RWPE1 (cell line): ENCODE measurements at regions of chr17 and their contacts with region 1.

Region 1: GRCh38 chr17:45218895-45219661 is 2.6 kb upstream of the FMNL1 start:
- DNase-seq: peak; percentile 70
- H3K27ac ChIP-seq: peak overlapping the region; percentile 12; the same call in 1 of the 2 replicates
- CTCF ChIP-seq: peak; percentile 89

Region 2: DNA sequence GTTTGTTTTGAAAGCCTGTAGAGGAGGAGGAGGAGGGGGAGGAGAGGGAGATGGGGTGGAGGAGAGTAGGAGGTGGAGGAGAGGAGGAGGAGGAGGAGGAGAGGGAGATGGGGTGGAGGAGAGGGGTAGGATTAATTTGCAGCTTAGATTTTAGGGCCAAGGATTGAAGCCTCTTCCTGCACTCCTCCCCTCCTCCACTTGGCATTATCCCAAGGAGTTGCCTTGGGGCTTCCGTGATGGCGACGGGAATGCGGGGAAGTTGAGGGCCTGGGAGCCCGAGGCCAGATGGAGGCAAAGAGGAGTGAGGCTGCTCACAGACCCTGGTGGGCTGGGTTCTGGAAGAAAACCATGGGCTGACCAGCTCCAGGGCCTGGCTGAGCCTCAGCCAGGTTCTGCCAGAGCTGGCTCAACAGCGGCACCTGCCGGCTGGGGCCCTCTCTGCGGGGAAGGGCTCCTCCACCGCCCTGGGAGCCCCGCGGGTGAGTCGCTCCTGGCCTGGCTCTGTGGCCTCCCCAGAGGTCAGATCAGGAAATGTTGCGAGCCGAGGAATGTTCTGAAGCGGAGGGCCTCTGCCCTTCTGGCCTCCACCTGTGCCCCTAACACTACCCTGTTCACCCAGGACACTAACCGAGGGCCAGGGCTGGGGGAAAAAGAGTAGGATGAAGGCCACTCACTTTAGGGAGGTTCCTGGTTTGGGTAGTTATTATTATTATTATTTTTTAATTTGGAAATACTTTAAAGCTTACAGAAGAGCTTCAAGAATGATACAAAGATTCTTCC is 21.3 kb before region 1 on chr17:
- CTCF ChIA-PET with region 1: interaction called, 10 read pairs
- POLR2A ChIA-PET with region 1: no interaction called
- DNase-seq: peak; percentile 86
- H3K27ac ChIP-seq: peak overlapping the region; percentile 69
- CTCF ChIP-seq: peak; percentile 99

Region 3: GRCh38 chr17:45235416-45236281 is 16.6 kb after region 1 on chr17:
- CTCF ChIA-PET with region 1: interaction called, 24 read pairs
- POLR2A ChIA-PET with region 1: interaction called, 6 read pairs
- DNase-seq: peak; percentile 61
- H3K27ac ChIP-seq: no peak overlapping the region
- CTCF ChIP-seq: peak; percentile 87

Region 4: GRCh38 chr17:45277216-45277849 is 58.3 kb after region 1 on chr17:
- CTCF ChIA-PET with region 1: interaction called, 10 read pairs
- POLR2A ChIA-PET with region 1: no interaction called
- DNase-seq: peak; percentile 70
- H3K27ac ChIP-seq: peak overlapping the region; percentile 87
- CTCF ChIP-seq: peak; percentile 90

Region 5: DNA sequence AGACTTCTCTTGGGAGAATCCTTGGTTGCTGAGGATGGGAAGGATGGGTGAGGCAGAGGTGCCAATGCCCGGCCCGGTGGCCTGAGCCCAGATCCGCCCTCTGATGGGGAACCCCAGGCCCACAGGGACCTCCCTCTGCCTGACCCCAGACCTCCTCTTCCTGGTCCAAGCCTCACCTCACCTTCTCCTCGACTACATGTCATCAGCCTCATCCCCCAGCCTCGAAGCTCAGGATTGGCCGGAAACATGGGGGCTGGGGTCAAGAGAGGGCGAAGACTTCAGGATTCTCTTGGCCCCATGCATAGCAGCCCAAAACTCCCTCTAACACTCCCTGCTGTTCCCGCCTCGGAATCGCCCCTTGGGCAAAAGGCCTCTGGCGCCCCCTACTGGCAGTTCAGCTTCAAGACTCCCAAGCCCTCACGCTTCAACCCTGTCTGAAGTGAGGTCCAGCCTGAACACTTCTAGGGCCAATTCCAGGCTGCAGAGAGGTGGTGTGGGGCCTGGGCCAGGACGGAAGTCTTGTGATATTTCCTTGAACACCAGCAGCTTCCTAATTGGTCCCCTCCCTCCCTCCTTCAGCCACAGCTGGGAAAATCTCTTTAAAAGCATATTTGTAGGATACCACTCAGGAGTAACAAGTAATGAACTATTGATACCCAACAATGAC is 166.4 kb after region 1 on chr17:
- CTCF ChIA-PET with region 1: interaction called, 24 read pairs
- POLR2A ChIA-PET with region 1: no interaction called
- DNase-seq: peak; percentile 79
- H3K27ac ChIP-seq: peak overlapping the region; percentile 17
- CTCF ChIP-seq: peak; percentile 97

Region 6: DNA sequence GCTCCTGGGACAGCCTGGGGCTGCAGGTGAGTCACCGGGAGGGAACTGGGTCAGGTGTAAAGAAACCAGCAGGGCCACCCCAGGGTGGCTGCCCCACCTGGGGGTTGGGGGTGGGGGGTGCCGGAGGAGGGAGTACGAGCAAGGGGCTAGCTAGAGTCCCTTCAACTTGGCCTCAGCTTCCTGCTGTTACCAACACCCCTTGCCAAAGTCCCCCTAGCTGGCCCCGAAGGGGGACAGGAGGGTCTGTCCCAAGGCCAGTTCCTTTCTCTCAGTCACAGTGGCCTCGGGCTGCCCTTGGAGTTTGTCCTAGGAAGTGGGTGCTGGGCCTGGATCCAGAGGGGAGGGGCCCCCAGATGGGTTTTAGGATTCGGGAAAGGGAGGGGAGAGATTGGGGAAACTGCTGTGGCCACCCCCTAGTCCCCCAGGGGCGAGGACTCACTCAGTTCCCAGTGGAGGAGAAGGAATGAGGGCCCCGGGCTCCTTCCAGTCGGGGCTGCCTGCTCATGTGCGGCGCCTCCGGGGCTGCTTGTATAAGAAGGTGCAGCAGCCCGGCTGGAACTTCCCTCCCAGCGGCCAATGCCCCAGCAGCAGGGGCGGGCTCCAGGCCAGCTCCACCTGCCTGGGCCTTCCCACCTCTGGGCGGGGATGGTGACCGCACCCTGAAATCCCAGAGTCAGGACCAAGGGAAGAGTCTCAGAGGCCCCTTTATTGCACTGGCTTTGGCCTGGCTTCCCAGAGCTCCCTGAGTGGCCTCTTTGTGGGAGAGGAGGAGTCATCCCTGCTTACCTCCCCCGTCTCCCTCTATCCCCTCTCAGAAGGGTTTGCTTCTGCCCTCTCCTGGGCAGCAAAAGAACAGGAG is 206.3 kb after region 1 on chr17:
- CTCF ChIA-PET with region 1: interaction called, 11 read pairs
- POLR2A ChIA-PET with region 1: interaction called, 3 read pairs
- DNase-seq: peak; percentile 89
- H3K27ac ChIP-seq: peak overlapping the region; percentile 86
- CTCF ChIP-seq: peak; percentile 37; the same call in 1 of the 2 replicates